ENCODE measurements at regions of chr15 and their contacts with region 1.

Region 1: DNA sequence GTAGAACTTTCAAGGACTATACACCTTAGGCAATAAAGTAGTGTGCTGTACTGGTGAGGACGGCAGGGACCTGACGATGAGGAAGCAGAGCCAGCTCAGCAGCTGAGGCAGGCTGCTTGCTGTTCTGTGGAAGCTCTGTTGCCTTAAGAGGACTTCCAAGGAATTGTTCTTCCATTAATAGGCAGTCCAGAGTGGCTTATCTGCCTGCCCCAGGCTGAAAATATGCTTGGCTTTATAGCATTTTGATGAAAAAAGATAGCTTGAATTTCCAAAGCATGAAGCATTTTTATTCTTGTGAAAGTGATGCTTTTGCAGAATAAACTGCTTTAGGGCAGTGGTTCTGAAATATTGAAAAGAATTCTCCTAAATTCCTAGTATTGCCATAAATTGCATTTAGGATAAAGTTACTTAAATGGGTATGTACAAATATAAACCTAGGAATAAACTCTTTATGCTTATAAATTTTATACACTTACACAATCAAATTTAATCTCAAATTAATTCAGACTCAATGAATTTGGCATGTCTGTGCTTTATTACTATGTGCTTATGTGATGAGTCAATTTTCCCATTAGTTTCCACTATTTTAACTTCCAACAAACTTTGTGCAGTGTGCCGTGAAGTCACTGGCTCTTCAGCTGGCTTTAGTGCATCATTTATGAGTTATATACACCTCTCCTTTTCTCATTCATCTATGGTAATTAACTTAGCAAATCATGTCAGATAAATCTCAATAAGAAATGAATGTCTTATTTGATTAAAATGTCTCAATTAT is 231.0 kb upstream of the RASGRP1 start:
- DNase-seq: no peak
- ATAC-seq: no peak
- H3K4me3 ChIP-seq: no peak overlapping the region
- H3K27ac ChIP-seq: no peak overlapping the region
- H3K4me1 ChIP-seq: no peaks in the 10 kb centered on the region
- H3K27me3 ChIP-seq: no peaks in the 10 kb centered on the region
- CTCF ChIP-seq: no peak
- POLR2A ChIP-seq: no peak

Region 2: DNA sequence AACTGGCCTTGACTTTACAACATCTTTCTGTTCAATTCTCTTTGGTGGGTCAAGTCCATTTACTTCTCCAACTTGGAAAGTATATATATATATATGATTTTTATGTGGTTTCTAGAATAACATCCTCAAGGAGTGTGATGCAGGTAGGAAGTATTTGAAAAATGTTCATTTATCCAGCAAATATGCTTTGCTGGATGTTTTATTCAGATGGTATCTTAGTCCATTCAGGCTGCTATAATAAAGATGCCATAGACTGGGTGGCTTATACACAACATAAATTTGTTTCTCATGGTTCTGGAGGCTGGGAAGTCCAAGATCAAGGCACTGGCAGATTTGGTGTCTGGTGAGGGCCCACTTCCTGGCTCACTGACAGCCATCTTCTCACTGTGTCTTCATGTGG is 62.3 kb before region 1 on chr15:
- intact Hi-C with region 1: loop called in 1 of 10 experiments (anchors 10 kb)
- DNase-seq: no peak
- ATAC-seq: no peak
- H3K4me3 ChIP-seq: no peak overlapping the region
- H3K27ac ChIP-seq: no peak overlapping the region
- H3K4me1 ChIP-seq: no peaks in the 10 kb centered on the region
- H3K27me3 ChIP-seq: peaks cover 0 to 2% (median 0%) of the 10 kb centered on the region in 9 donors
- CTCF ChIP-seq: no peak
- POLR2A ChIP-seq: no peak

Measured in heart left ventricle (tissue), 16 donors.